HEK293 (cell line): ENCODE measurements at regions of chr7 and their contacts with region 1.

Region 1: GRCh38 chr7:77753173-77753572 is 45.1 kb downstream of the TMEM60 start:
- H3K4me3 ChIP-seq: no peak overlapping the region
- H3K27ac ChIP-seq: no peak overlapping the region
- H3K4me1 ChIP-seq: peaks cover 5% of the 10 kb centered on the region
- CTCF ChIP-seq: no peak

Region 2: GRCh38 chr7:77657427-77658224 is 95.5 kb before region 1 on chr7:
- CTCF ChIA-PET with region 1: interaction called, 39 read pairs
- POLR2A ChIA-PET with region 1: no interaction called
- H3K4me3 ChIP-seq: no peak overlapping the region
- H3K27ac ChIP-seq: no peak overlapping the region
- H3K4me1 ChIP-seq: no peaks in the 10 kb centered on the region
- CTCF ChIP-seq: no peak

Region 3: GRCh38 chr7:77738871-77739270 is 14.3 kb before region 1 on chr7:
- CTCF ChIA-PET with region 1: no interaction called
- POLR2A ChIA-PET with region 1: no interaction called
- H3K4me3 ChIP-seq: no peak overlapping the region
- H3K27ac ChIP-seq: no peak overlapping the region
- H3K4me1 ChIP-seq: peaks cover 20% of the 10 kb centered on the region
- CTCF ChIP-seq: no peak